CD4-positive, alpha-beta memory T cell (primary cell): ENCODE measurements at regions of chr22 and their contacts with region 1.

Region 1: DNA sequence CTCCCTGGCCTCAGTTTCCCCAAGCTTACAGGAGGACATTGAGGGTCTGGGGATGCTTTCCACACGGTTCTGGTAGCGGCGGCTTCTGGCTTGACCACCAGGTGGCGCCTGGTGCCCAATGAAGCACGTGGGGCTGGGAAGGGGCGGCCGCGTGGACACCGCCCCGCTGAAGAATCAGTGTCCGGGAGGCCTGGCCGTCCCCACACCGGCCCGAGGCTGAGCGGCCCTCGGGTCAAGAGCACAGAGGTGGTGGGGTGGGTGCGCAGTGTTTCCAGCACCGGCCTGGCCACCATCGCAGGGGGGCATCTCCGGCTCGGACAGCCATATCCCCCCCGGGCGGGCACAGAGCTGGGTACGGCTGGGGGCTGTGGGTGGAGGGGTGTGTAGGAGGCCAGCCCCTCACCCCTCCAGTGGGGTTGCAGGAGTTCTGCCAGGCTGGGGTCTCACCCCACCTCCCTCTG is 27.8 kb upstream of the PPARA start:
- DNase-seq: peak in 4 of 5 donors; percentile 51 to 66 (median 58)
- H3K4me3 ChIP-seq: no peak overlapping the region
- H3K4me3 Mint-ChIP-seq: no peak overlapping the region
- H3K27ac ChIP-seq: no peak overlapping the region
- H3K27ac Mint-ChIP-seq: no peak overlapping the region
- H3K4me1 ChIP-seq: no peaks in the 10 kb centered on the region
- H3K4me1 Mint-ChIP-seq: no peaks in the 10 kb centered on the region
- H3K27me3 ChIP-seq: no peaks in the 10 kb centered on the region
- H3K27me3 Mint-ChIP-seq: no peaks in the 10 kb centered on the region

Region 2: DNA sequence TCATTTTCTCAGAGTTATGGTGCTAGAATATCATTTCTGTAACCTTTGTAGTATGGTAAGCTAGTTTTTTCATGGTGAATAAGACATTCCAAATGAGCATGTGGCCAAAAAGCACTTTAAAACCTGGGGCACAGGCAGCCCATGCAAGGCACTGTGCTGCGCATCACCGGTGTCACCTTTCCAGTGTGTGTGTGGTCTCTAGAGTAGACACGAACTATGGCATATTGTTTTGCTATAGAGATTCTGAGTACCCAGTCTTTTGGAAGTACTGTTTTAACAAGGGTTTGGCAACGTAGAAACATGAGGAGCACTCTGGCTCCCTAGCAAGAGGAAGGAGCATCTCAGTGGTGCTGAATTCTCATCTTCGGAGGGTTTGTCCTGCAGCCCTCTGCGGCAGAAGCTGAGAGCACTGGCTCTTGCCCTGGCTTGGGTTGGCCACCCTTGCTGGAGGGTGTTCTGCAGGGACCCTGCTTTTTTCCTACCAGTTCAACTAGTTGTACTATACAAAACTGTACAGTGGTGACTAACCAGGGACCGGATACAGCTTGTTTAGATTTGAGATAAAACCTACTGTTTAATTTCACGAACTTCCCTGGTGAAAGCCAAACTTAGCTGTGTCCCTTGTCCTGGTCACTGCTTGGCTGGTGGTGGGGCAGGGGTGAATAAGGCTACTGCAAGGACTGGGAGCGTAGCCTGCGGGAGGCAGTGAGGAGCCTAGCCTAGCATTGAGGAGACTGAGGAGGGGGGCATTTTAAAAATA is 315.2 kb before region 1 on chr22:
- CTCF ChIA-PET with region 1: no interaction called
- POLR2A ChIA-PET with region 1: no interaction called
- intact Hi-C with region 1: no loop called
- DNase-seq: no peak
- H3K4me3 ChIP-seq: no peak overlapping the region
- H3K4me3 Mint-ChIP-seq: no peak overlapping the region
- H3K27ac ChIP-seq: no peak overlapping the region
- H3K27ac Mint-ChIP-seq: no peak overlapping the region
- H3K4me1 ChIP-seq: no peaks in the 10 kb centered on the region
- H3K4me1 Mint-ChIP-seq: peaks cover 0 to 20% (median 9%) of the 10 kb centered on the region in 4 donors
- H3K27me3 ChIP-seq: no peaks in the 10 kb centered on the region
- H3K27me3 Mint-ChIP-seq: no peaks in the 10 kb centered on the region

Region 3: GRCh38 chr22:46309526-46310085 is 187.1 kb after region 1 on chr22:
- CTCF ChIA-PET with region 1: interaction called, 48 read pairs
- POLR2A ChIA-PET with region 1: interaction called, 3 read pairs
- intact Hi-C with region 1: no loop called
- DNase-seq: no peak
- H3K4me3 ChIP-seq: no peak overlapping the region
- H3K4me3 Mint-ChIP-seq: no peak overlapping the region
- H3K27ac ChIP-seq: no peak overlapping the region
- H3K27ac Mint-ChIP-seq: peak overlapping the region in 2 of 7 donors; percentile 9 to 66
- H3K4me1 ChIP-seq: no peaks in the 10 kb centered on the region
- H3K4me1 Mint-ChIP-seq: peaks cover 0 to 2% (median under 1%) of the 10 kb centered on the region in 4 donors
- H3K27me3 ChIP-seq: no peaks in the 10 kb centered on the region
- H3K27me3 Mint-ChIP-seq: no peaks in the 10 kb centered on the region

Region 4: GRCh38 chr22:46317646-46318045 is 195.1 kb after region 1 on chr22:
- CTCF ChIA-PET with region 1: interaction called, 48 read pairs
- POLR2A ChIA-PET with region 1: interaction called, 3 read pairs
- intact Hi-C with region 1: no loop called
- DNase-seq: no peak
- H3K4me3 ChIP-seq: no peak overlapping the region
- H3K4me3 Mint-ChIP-seq: no peak overlapping the region
- H3K27ac ChIP-seq: no peak overlapping the region
- H3K27ac Mint-ChIP-seq: peak overlapping the region in 1 of 7 donors; percentile 28
- H3K4me1 ChIP-seq: no peaks in the 10 kb centered on the region
- H3K4me1 Mint-ChIP-seq: no peaks in the 10 kb centered on the region
- H3K27me3 ChIP-seq: no peaks in the 10 kb centered on the region
- H3K27me3 Mint-ChIP-seq: no peaks in the 10 kb centered on the region